ENCODE measurements at regions of chr4 and their contacts with region 1.

Region 1: GRCh38 chr4:154082760-154083535 is 294.1 kb upstream of the SFRP2 start:
- DNase-seq: peak; percentile 58
- ATAC-seq: peak; percentile 100
- H3K4me3 Mint-ChIP-seq: no peak overlapping the region
- H3K27ac Mint-ChIP-seq: peak overlapping the region; percentile 10; the same call in 1 of the 2 replicates
- H3K4me1 Mint-ChIP-seq: peaks cover 13% of the 10 kb centered on the region
- H3K27me3 Mint-ChIP-seq: no peaks in the 10 kb centered on the region
- CTCF ChIP-seq: peak; percentile 59

Region 2: GRCh38 chr4:153890761-153891160 is 192.2 kb before region 1 on chr4:
- CTCF ChIA-PET with region 1: no interaction called
- POLR2A ChIA-PET with region 1: no interaction called
- DNase-seq: no peak
- ATAC-seq: no peak
- H3K4me3 Mint-ChIP-seq: no peak overlapping the region
- H3K27ac Mint-ChIP-seq: no peak overlapping the region
- H3K4me1 Mint-ChIP-seq: peaks cover 5% of the 10 kb centered on the region
- H3K27me3 Mint-ChIP-seq: no peaks in the 10 kb centered on the region; the same call in 1 of the 2 replicates
- CTCF ChIP-seq: no peak

Region 3: DNA sequence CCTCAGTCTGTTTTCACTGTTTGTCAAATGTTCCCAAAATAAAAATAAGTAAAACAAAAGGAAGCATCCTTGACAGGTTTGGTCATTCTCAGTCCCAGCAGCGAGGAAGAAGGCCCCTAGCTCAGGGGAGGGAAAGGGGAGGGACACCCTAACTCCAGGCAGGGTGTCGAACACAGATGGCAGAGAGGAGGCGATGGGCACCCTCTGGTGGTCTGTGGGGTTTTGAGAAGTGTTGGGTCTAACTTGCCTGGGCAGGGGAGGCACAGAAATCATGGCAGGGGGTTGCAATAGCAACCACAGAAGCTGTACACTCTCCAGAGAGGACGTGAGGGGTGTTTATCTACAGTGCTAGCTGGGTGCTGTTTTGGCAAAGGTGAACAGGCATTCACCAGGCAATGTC is 64.3 kb before region 1 on chr4:
- CTCF ChIA-PET with region 1: interaction called, 10 read pairs
- POLR2A ChIA-PET with region 1: no interaction called
- DNase-seq: peak; percentile 67
- ATAC-seq: peak; percentile 99
- H3K4me3 Mint-ChIP-seq: no peak overlapping the region
- H3K27ac Mint-ChIP-seq: no peak overlapping the region
- H3K4me1 Mint-ChIP-seq: peaks cover 17% of the 10 kb centered on the region
- H3K27me3 Mint-ChIP-seq: no peaks in the 10 kb centered on the region
- CTCF ChIP-seq: no peak

Region 4: GRCh38 chr4:154049457-154050181 is 33.3 kb before region 1 on chr4:
- CTCF ChIA-PET with region 1: interaction called, 12 read pairs
- POLR2A ChIA-PET with region 1: no interaction called
- DNase-seq: peak; percentile 59
- ATAC-seq: peak; percentile 97
- H3K4me3 Mint-ChIP-seq: no peak overlapping the region
- H3K27ac Mint-ChIP-seq: no peak overlapping the region
- H3K4me1 Mint-ChIP-seq: peaks cover 19% of the 10 kb centered on the region
- H3K27me3 Mint-ChIP-seq: no peaks in the 10 kb centered on the region; the same call in 1 of the 2 replicates
- CTCF ChIP-seq: no peak

Measured in WTC11 (cell line).